Activated T-helper 2 cell treated with anti-CD3 and anti-CD28 coated beads, Interferon-gamma antibody, Interleukin-2, Interleukin-4, amounts not matched to agents 10 μg/mL and 5 μg/mL and 100 μg/mL, durations not matched to agents 14 hours and 24 hours and 36 hours (primary cell): ENCODE measurements at regions of chr17 and their contacts with region 1.

Region 1: DNA sequence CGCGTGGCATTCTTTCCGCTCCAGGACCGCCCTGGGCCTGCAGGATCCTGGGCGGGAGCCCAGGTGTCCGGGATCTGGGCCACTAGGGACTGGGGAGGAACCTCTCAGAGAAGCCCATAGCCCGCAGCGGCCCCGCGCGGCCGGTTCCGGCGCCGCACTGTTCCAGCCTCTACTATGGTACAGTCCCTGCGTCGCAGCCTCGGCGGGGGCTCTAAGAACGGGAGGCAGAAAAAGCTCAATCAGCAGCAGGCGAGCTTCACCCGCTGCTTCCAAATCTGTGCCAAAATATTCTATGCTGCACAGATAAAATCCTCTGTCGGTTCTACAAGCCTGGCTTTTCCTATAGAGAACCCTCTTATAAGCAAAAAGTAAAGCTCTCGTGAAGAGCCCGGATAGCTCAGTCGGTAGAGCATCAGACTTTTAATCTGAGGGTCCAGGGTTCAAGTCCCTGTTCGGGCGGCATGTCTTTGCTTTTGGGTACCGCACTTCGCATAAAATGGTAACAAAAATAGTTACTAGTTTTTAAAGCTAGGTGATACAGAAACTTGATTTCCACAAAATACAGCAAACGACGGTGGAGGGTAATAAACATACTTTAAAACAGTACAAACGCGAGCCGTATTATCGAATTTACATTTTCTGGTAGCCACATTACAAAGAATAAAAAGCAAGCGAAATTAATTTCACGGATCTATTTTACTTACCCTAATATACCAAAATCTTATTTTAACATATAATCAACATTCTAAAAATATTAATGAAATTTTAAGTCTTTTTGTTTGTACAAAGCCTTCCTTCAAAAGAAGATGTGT is 661 bp upstream of the ALOXE3 start:
- DNase-seq: peak; percentile 79
- H3K4me3 Mint-ChIP-seq: peak overlapping the region; percentile 89
- H3K27ac Mint-ChIP-seq: peak overlapping the region; percentile 81
- H3K4me1 Mint-ChIP-seq: peaks cover 42% of the 10 kb centered on the region
- H3K27me3 Mint-ChIP-seq: peaks cover 48% of the 10 kb centered on the region

Region 2: DNA sequence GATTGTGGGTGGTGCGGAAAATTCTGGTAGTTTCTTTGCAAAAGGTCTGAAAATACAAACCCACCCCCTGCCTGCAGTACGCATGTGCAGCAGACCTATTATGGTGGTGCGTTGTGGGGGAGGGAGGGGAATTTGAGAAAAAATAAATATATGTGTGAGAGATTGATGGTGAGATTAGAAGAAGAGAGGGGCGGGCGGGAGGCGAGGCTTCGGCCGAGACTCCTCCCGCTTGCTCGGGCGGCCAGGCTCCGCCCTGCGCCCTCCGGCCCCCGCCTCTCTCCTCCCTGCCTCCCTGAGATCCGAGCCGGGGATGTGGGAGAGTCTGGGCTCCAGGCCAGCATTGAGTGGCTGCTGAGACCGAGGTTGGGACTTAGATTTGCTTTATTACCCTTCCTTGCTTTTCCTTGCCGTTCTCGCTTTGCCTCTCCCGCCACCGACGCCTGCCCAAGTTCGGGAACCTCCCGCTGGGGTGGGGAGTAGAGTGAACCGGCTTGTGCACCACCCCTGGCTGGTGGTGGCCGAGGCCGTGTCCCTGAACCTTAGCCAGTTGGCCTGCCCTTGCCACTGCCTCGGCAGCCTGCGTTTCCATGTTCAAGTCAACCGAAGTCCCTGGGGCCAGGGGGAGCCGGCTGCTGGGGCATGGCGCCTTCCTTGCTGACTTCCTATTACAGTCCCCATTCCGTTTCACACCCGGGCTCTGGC is 231.3 kb before region 1 on chr17:
- intact Hi-C with region 1: loop called (anchors 10 kb)
- DNase-seq: peak; percentile 87
- H3K4me3 Mint-ChIP-seq: no peak overlapping the region
- H3K27ac Mint-ChIP-seq: no peak overlapping the region
- H3K4me1 Mint-ChIP-seq: peaks cover 8% of the 10 kb centered on the region
- H3K27me3 Mint-ChIP-seq: no peaks in the 10 kb centered on the region

Region 3: DNA sequence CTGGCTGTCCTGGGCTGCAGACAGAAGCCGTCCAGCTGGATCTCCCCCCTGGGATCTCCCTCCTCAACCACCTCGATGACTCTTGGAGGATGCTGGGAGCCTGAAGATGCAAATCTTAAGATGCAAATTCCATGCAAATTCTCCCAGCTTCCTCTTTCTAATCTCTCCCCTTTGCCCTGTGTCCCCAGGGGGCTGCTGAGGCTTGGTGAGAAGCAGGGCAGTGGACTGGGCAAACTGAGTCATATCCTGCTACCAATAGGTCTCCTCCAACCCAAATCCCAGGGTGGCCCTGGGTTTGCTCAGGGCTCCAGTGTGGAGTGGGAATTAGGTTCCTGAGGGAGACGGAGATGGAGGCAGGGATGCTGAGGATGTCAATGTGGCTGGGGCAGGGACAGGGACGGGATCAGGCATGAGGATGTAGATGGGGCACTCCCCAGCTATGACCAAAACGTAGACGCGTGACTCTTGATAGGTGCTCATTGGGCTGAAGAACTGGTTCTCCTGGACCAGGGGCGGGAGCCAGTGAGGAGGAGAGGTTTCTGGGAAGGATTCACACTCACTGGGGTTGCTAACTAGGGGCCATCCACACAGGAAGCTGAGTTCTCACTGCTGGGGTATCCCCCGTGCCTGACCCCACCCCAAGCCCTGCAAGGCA is 27.8 kb before region 1 on chr17:
- intact Hi-C with region 1: loop called (anchors 1 kb)
- DNase-seq: no peak
- H3K4me3 Mint-ChIP-seq: no peak overlapping the region
- H3K27ac Mint-ChIP-seq: no peak overlapping the region
- H3K4me1 Mint-ChIP-seq: peaks cover 7% of the 10 kb centered on the region
- H3K27me3 Mint-ChIP-seq: peaks cover 23% of the 10 kb centered on the region

Region 4: GRCh38 chr17:8173056-8173870 is 54.3 kb after region 1 on chr17:
- intact Hi-C with region 1: loop called (anchors 5 kb)
- DNase-seq: peak; percentile 79
- H3K4me3 Mint-ChIP-seq: peak overlapping the region; percentile 86
- H3K27ac Mint-ChIP-seq: peak overlapping the region; percentile 100
- H3K4me1 Mint-ChIP-seq: peaks cover 40% of the 10 kb centered on the region
- H3K27me3 Mint-ChIP-seq: no peaks in the 10 kb centered on the region

Region 5: GRCh38 chr17:8248751-8249607 is 130.0 kb after region 1 on chr17 and contains the start of gene PFAS:
- intact Hi-C with region 1: loop called (anchors 1 kb)
- DNase-seq: peak; percentile 95
- H3K4me3 Mint-ChIP-seq: peak within 1 kb of the TSS; percentile 99
- H3K27ac Mint-ChIP-seq: peak within 1 kb of the TSS; percentile 100
- H3K4me1 Mint-ChIP-seq: peaks cover 30% of the 10 kb centered on the region
- H3K27me3 Mint-ChIP-seq: no peaks in the 10 kb centered on the region
- total RNA-seq, gene PFAS: 165 and 174 TPM in 2 replicates